Heart right ventricle (tissue), 16 donors: ENCODE measurements at regions of chr10 and their contacts with region 1.

Region 1: GRCh38 chr10:29926693-29927048 is 132.7 kb downstream of the JCAD start:
- DNase-seq: no peak
- ATAC-seq: peak in 1 of 8 donors; percentile 35
- H3K4me3 ChIP-seq: no peak overlapping the region
- H3K27ac ChIP-seq: no peak overlapping the region
- H3K4me1 ChIP-seq: peaks cover 0 to 6% (median 0%) of the 10 kb centered on the region in 9 donors
- H3K27me3 ChIP-seq: no peaks in the 10 kb centered on the region
- CTCF ChIP-seq: peak in 8 of 9 donors; percentile 16 to 51 (median 37)

Region 2: GRCh38 chr10:29865700-29866340 is 60.9 kb before region 1 on chr10:
- intact Hi-C with region 1: no loop called
- DNase-seq: no peak
- ATAC-seq: no peak
- H3K4me3 ChIP-seq: no peak overlapping the region
- H3K27ac ChIP-seq: no peak overlapping the region
- H3K4me1 ChIP-seq: no peaks in the 10 kb centered on the region
- H3K27me3 ChIP-seq: no peaks in the 10 kb centered on the region
- CTCF ChIP-seq: no peak

Region 3: DNA sequence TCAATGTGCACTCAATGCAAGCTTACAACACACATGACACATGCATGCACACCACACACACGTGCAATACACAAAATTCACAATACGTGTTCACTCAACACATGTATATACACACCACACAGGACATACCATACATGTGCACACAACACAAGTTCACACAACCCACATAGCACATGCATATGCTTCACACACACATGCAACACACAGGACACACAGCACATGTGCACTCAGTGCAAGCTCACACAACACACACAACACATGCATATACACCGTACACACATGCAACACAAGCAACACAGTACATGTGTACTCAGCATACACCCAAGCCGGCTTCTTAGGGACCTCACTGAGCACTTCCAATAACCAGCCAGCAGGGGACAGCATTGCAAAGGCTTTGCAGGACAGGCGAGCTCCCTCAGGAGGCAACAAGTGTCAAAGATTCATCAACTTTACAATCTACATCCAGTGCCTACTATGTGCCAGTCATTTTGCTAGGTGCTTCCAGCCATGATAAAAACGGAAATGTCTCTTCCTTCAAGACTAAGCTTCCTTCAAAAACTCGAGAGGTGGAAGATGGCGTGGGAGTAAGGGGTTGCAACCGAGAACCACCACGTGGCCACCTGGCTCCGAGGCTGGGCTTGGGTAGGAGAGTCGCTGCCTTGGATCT is 71.6 kb after region 1 on chr10:
- intact Hi-C with region 1: loop called in 2 of 10 experiments (anchors 5 to 10 kb)
- DNase-seq: peak; percentile 62 to 80
- ATAC-seq: peak in 7 of 8 donors; percentile 45 to 70 (median 63)
- H3K4me3 ChIP-seq: no peak overlapping the region
- H3K27ac ChIP-seq: no peak overlapping the region
- H3K4me1 ChIP-seq: peaks cover 11 to 36% (median 29%) of the 10 kb centered on the region in 9 donors
- H3K27me3 ChIP-seq: peaks cover 0 to 11% (median 0%) of the 10 kb centered on the region in 7 donors
- CTCF ChIP-seq: peak; percentile 96 to 100 (median 99)

Region 4: DNA sequence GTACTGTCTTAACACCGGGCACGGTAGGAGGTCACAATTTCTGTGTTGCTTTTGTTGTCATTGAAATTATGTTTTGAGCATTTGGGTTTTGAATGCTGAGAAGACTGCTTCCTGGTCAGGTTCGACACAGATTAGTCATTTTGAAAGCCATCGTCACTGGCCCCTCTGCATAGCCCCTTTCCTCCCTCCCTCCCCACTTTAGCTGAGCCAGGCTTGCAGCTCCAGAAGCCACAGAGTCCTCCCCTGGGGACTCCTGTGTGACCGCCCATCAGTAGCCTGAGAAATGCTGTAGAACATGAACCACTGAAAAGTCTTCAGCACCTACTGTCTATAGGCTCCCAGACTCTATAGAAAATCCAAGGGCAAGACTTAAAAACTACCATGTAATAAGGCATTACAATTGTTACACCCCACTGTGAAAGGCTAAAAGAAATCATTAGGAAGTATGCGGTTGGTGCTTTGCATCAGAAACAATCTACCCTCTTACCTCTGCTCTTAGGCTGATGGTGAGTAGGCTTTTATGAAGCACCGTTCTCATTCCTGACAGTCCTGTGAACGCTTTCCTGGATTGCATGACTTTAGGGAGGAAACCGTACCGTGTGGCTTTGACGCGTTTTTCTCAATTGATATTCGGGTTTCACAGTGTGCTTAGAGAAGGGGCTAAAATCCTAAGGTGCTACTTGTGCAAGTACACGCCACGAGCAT is 107.9 kb after region 1 on chr10:
- intact Hi-C with region 1: no loop called
- DNase-seq: no peak
- ATAC-seq: no peak
- H3K4me3 ChIP-seq: no peak overlapping the region
- H3K27ac ChIP-seq: no peak overlapping the region
- H3K4me1 ChIP-seq: peaks cover 4 to 72% (median 38%) of the 10 kb centered on the region in 9 donors
- H3K27me3 ChIP-seq: peaks cover 0 to 48% (median 12%) of the 10 kb centered on the region in 7 donors
- CTCF ChIP-seq: no peak